ENCODE measurements at regions of chr16 and their contacts with region 1.

Region 1: DNA sequence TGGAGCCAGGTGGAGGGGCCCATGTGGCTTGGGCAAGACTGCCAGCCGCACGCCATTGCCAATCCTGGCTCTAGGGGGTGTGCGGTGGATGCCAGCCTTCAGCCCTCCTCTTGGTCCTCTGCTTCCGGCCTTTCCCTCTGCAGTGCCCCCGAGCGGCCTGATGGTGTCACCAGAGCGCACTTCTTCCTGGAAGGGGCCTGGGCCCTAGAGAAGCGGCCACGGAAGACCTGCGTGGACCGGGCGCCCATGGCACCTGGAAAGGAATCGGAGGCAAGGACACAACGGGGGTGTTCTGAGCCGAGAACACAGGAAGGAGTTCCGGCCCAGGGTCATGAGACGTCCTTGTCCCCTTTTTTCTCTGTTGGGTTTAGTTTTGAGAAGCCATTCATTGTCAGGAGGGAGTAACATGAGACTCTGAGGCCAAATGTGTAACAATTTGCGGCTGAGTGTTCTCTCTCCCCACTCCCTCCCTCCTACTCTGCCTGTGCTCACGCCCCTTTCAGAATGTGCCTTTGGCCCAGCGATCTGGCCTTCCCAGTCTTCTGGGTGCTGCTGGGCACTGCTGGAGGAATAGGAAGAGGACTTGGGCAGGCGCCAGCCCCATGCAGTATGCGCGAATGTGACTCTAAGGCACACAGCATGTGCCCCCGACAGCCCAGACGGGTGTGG is 92.8 kb downstream of the IRX3 start:
- DNase-seq: peak; percentile 70 to 89
- ATAC-seq: peak; percentile 92 to 94 (median 94)
- H3K4me3 ChIP-seq: peak overlapping the region; percentile 55
- H3K27ac ChIP-seq: peak overlapping the region; percentile 76
- H3K4me1 ChIP-seq: no peaks in the 10 kb centered on the region
- H3K27me3 ChIP-seq: no peaks in the 10 kb centered on the region
- CTCF ChIP-seq: peak; percentile 85

Region 2: GRCh38 chr16:53945996-53946395 is 247.8 kb before region 1 on chr16:
- intact Hi-C with region 1: loop called in 1 of 2 experiments (anchors 2 kb)
- DNase-seq: no peak
- ATAC-seq: peak; percentile 69 to 93 (median 80)
- H3K4me3 ChIP-seq: no peak overlapping the region
- H3K27ac ChIP-seq: no peak overlapping the region
- H3K4me1 ChIP-seq: peaks cover 14% of the 10 kb centered on the region
- H3K27me3 ChIP-seq: no peaks in the 10 kb centered on the region
- CTCF ChIP-seq: peak; percentile 79

Region 3: GRCh38 chr16:54216268-54216667 is 22.5 kb after region 1 on chr16:
- intact Hi-C with region 1: no loop called
- DNase-seq: peak in 1 of 2 donors; percentile 72
- ATAC-seq: peak in 2 of 4 donors; percentile 37 to 49
- H3K4me3 ChIP-seq: no peak overlapping the region
- H3K27ac ChIP-seq: no peak overlapping the region
- H3K4me1 ChIP-seq: peaks cover 4% of the 10 kb centered on the region
- H3K27me3 ChIP-seq: no peaks in the 10 kb centered on the region
- CTCF ChIP-seq: no peak

Region 4: GRCh38 chr16:54286090-54286993 is 92.5 kb after region 1 on chr16 and contains the start of gene IRX3:
- intact Hi-C with region 1: loop called in 1 of 2 experiments (anchors 5 kb)
- DNase-seq: peak; percentile 69 to 93
- ATAC-seq: peak; percentile 76 to 86 (median 82)
- H3K4me3 ChIP-seq: peak within 1 kb of the TSS; percentile 78
- H3K27ac ChIP-seq: peak within 1 kb of the TSS; percentile 76
- H3K4me1 ChIP-seq: no peaks in the 10 kb centered on the region
- H3K27me3 ChIP-seq: peaks cover 0 to 57% (median 0%) of the 10 kb centered on the region in 3 donors
- CTCF ChIP-seq: no peak
- total RNA-seq, gene IRX3: 1.2 to 27.6 (median 5.7) TPM

Region 5: DNA sequence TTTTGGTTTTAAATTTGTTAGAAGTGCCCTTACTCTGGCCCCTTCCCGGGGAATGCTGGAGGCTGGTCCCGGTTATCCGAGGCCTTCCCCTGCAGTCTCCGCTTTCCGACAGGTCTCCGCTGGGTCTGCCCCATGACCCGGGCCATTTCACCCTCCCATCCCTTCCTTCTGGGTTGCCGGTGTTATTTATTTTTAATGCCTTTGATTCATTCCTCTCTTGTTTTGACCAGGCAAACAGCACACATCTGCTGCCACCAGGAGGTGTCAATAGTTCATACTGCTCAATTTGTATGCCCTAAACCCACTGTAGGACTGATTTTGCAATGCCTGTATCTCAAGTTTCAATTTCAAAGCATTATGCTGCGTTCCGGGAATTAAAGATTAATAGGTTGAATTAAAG is 623.6 kb after region 1 on chr16:
- intact Hi-C with region 1: loop called in 1 of 2 experiments (anchors 10 kb)
- DNase-seq: no peak
- ATAC-seq: peak in 3 of 4 donors; percentile 62 to 76 (median 73)
- H3K4me3 ChIP-seq: no peak overlapping the region
- H3K27ac ChIP-seq: no peak overlapping the region
- H3K4me1 ChIP-seq: no peaks in the 10 kb centered on the region
- H3K27me3 ChIP-seq: peaks cover 0 to 2% (median 0%) of the 10 kb centered on the region in 3 donors
- CTCF ChIP-seq: peak; percentile 56